Sigmoid colon (tissue), 7 donors: ENCODE measurements at regions of chr14 and their contacts with region 1.

Region 1: GRCh38 chr14:22852940-22853767 is 16.8 kb downstream of the MMP14 start:
- DNase-seq: peak; percentile 94
- H3K4me3 ChIP-seq: peak overlapping the region; percentile 5 to 46 (median 42)
- H3K27ac ChIP-seq: peak overlapping the region; percentile 48 to 98 (median 80)
- H3K4me1 ChIP-seq: peaks cover 0 to 53% (median 46%) of the 10 kb centered on the region in 4 donors
- H3K27me3 ChIP-seq: no peaks in the 10 kb centered on the region
- CTCF ChIP-seq: peak; percentile 86 to 99 (median 98)
- EP300 ChIP-seq: no peak
- POLR2A ChIP-seq: no peak

Region 2: GRCh38 chr14:22570132-22570949 is 282.8 kb before region 1 on chr14:
- intact Hi-C with region 1: loop called (anchors 2 kb)
- DNase-seq: peak; percentile 84
- H3K4me3 ChIP-seq: no peak overlapping the region
- H3K27ac ChIP-seq: peak overlapping the region; percentile 12 to 69 (median 28)
- H3K4me1 ChIP-seq: peaks cover 0 to 32% (median 13%) of the 10 kb centered on the region in 4 donors
- H3K27me3 ChIP-seq: no peaks in the 10 kb centered on the region
- CTCF ChIP-seq: peak; percentile 76 to 85 (median 78)
- EP300 ChIP-seq: no peak
- POLR2A ChIP-seq: no peak

Region 3: GRCh38 chr14:22766456-22767322 is 86.5 kb before region 1 on chr14 and contains the start of gene OXA1L:
- intact Hi-C with region 1: loop called (anchors 5 kb)
- DNase-seq: peak; percentile 99
- H3K4me3 ChIP-seq: peak within 1 kb of the TSS; percentile 81 to 87 (median 85)
- H3K27ac ChIP-seq: peak within 1 kb of the TSS; percentile 84 to 89 (median 87)
- H3K4me1 ChIP-seq: peaks cover 0 to 22% (median 18%) of the 10 kb centered on the region in 4 donors
- H3K27me3 ChIP-seq: no peaks in the 10 kb centered on the region
- CTCF ChIP-seq: no peak
- EP300 ChIP-seq: no peak
- POLR2A ChIP-seq: peak; percentile 25 to 73
- total RNA-seq, gene OXA1L: 95.2 to 108 (median 102) TPM

Region 4: GRCh38 chr14:22822571-22823098 is 30.5 kb before region 1 on chr14:
- intact Hi-C with region 1: loop called (anchors 1 kb)
- DNase-seq: peak; percentile 90
- H3K4me3 ChIP-seq: peak overlapping the region; percentile 22 to 59 (median 46)
- H3K27ac ChIP-seq: peak overlapping the region; percentile 53 to 77 (median 62)
- H3K4me1 ChIP-seq: peaks cover 0 to 36% (median 29%) of the 10 kb centered on the region in 4 donors
- H3K27me3 ChIP-seq: no peaks in the 10 kb centered on the region
- CTCF ChIP-seq: peak; percentile 64 to 89 (median 80)
- EP300 ChIP-seq: no peak
- POLR2A ChIP-seq: no peak

Region 5: DNA sequence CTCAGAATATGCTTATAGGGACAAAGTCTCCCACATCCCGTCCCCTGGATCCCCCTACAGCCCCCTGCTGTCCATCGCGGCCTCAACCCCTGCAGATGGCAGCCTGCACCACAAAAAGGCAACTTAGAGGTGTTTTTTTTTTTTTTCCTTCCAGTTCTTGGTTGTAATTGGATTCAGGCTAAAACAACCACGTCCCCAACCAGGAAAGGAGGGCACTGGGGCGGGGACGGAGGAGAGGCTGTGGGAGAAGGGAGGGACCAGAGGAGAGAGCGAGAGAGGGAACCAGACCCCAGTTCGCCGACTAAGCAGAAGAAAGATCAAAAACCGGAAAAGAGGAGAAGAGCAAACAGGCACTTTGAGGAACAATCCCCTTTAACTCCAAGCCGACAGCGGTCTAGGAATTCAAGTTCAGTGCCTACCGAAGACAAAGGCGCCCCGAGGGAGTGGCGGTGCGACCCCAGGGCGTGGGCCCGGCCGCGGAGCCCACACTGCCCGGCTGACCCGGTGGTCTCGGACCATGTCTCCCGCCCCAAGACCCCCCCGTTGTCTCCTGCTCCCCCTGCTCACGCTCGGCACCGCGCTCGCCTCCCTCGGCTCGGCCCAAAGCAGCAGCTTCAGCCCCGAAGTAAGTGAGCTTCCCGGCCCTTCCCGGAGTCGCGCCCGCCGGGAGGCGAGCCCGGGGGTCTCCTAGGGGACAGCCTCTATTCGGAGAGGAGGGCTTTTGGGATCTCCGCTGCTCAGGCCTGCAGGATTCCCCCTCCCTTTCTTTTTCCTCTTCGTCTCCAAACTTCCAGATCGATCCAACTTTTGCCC is 16.6 kb before region 1 on chr14 and contains the start of gene MMP14:
- intact Hi-C with region 1: loop called (anchors 1 kb)
- DNase-seq: peak; percentile 94
- H3K4me3 ChIP-seq: peak within 1 kb of the TSS; percentile 95 to 98 (median 97)
- H3K27ac ChIP-seq: peak within 1 kb of the TSS; percentile 97 to 100 (median 98)
- H3K4me1 ChIP-seq: peaks cover 0 to 43% (median 37%) of the 10 kb centered on the region in 4 donors
- H3K27me3 ChIP-seq: no peaks in the 10 kb centered on the region
- CTCF ChIP-seq: peak; percentile 28 to 53 (median 46)
- EP300 ChIP-seq: no peak
- POLR2A ChIP-seq: peak; percentile 75 to 90
- total RNA-seq, gene MMP14: 86.6 to 140 (median 115) TPM

Region 6: GRCh38 chr14:24431569-24432258 is 1578.6 kb after region 1 on chr14:
- intact Hi-C with region 1: loop called (anchors 10 kb)
- DNase-seq: peak; percentile 95
- H3K4me3 ChIP-seq: peak overlapping the region; percentile 73 to 87 (median 76)
- H3K27ac ChIP-seq: peak overlapping the region; percentile 94 to 96 (median 95)
- H3K4me1 ChIP-seq: peaks cover 0 to 46% (median 41%) of the 10 kb centered on the region in 4 donors
- H3K27me3 ChIP-seq: no peaks in the 10 kb centered on the region
- CTCF ChIP-seq: peak; percentile 79 to 92 (median 84)
- EP300 ChIP-seq: no peak
- POLR2A ChIP-seq: no peak